IMR-90 (cell line): ENCODE measurements at regions of chr19 and their contacts with region 1.

Region 1: DNA sequence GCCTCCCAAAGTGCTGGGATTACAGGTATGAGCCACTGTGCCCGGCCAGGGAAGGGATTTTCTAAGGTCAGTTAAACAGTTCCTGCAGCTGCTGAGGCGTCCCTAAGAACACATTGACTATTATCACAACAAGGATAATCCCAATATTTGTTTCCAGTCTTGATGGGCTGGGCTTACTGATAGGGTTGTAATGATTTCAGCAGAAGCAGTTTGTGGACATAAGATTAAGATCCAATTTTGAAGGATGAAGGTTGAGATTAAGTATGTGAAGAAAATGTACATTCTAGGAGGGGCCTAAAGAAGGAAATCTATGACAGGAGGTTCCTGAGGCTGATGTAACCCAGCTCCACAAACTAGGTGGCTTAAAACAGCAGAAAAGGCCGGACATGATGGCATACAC is 10.7 kb upstream of the CCDC124 start:
- DNase-seq: no peak
- ATAC-seq: no peak
- H3K4me3 ChIP-seq: no peak overlapping the region
- H3K27ac ChIP-seq: no peak overlapping the region
- H3K4me1 ChIP-seq: no peaks in the 10 kb centered on the region
- H3K27me3 ChIP-seq: peaks cover 3% of the 10 kb centered on the region; the same call in 1 of the 2 replicates
- CTCF ChIP-seq: no peak
- POLR2A ChIP-seq: no peak
- RAD21 ChIP-seq: no peak

Region 2: DNA sequence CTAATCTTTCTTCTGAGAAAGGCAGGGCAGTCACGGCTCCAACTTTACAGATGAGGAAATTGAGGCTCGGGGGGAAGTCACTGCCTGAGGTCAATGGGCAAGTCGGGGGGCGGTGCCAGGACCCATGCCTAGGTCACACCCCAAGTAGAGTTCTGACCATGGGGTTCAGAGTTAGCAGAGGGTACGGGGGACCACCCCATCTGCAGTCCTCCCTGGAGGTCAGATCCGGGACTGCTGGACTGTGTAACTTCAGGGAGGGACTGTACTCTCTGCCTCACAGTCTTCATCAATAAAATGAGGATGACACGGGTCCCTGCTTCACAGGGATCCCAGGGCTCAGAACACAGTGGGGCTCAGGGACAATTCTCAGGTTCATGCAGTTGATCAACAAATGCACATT is 42.7 kb before region 1 on chr19:
- CTCF ChIA-PET with region 1: no interaction called
- POLR2A ChIA-PET with region 1: no interaction called
- dilution Hi-C with region 1: no loop called
- in situ Hi-C with region 1: loop called (anchors 5 kb)
- intact Hi-C with region 1: no loop called
- DNase-seq: no peak
- ATAC-seq: no peak
- H3K4me3 ChIP-seq: no peak overlapping the region
- H3K27ac ChIP-seq: no peak overlapping the region
- H3K4me1 ChIP-seq: no peaks in the 10 kb centered on the region
- H3K27me3 ChIP-seq: peaks cover 7% of the 10 kb centered on the region; the same call in 1 of the 2 replicates
- CTCF ChIP-seq: no peak
- POLR2A ChIP-seq: no peak
- RAD21 ChIP-seq: no peak